ENCODE measurements at regions of chr4 and their contacts with region 1.

Region 1: GRCh38 chr4:118278473-118279274 is 74.1 kb downstream of the PRSS12 start:
- DNase-seq: peak; percentile 91 to 99 (median 95)
- ATAC-seq: peak; percentile 98
- H3K4me3 ChIP-seq: peak overlapping the region; percentile 80
- H3K4me3 Mint-ChIP-seq: peak overlapping the region; percentile 91 to 98 (median 94)
- H3K27ac ChIP-seq: peak overlapping the region; percentile 94
- H3K27ac Mint-ChIP-seq: peak overlapping the region; percentile 93 to 99 (median 98)
- H3K4me1 ChIP-seq: peaks cover 16 to 20% of the 10 kb centered on the region in 2 donors
- H3K4me1 Mint-ChIP-seq: peaks cover 24 to 58% (median 48%) of the 10 kb centered on the region in 7 donors
- H3K27me3 ChIP-seq: no peaks in the 10 kb centered on the region
- H3K27me3 Mint-ChIP-seq: no peaks in the 10 kb centered on the region

Region 2: GRCh38 chr4:118352843-118353533 is 74.3 kb after region 1 on chr4 and contains the start of gene PRSS12:
- CTCF ChIA-PET with region 1: no interaction called
- POLR2A ChIA-PET with region 1: no interaction called
- intact Hi-C with region 1: loop called (anchors 1 kb)
- DNase-seq: peak; percentile 5 to 69 (median 34)
- ATAC-seq: peak; percentile 84
- H3K4me3 ChIP-seq: peak within 1 kb of the TSS; percentile 13
- H3K4me3 Mint-ChIP-seq: peak within 1 kb of the TSS; percentile 78 to 86 (median 84)
- H3K27ac ChIP-seq: no peak within 1 kb of the TSS
- H3K27ac Mint-ChIP-seq: peak within 1 kb of the TSS in 4 of 9 donors; percentile 15 to 43 (median 32)
- H3K4me1 ChIP-seq: peaks cover 6 to 7% of the 10 kb centered on the region in 2 donors
- H3K4me1 Mint-ChIP-seq: peaks cover 6 to 20% (median 16%) of the 10 kb centered on the region in 7 donors
- H3K27me3 ChIP-seq: peaks cover 11 to 14% of the 10 kb centered on the region in 2 donors
- H3K27me3 Mint-ChIP-seq: peaks cover 72 to 83% (median 78%) of the 10 kb centered on the region in 5 donors
- total RNA-seq, gene PRSS12: not detected

Region 3: DNA sequence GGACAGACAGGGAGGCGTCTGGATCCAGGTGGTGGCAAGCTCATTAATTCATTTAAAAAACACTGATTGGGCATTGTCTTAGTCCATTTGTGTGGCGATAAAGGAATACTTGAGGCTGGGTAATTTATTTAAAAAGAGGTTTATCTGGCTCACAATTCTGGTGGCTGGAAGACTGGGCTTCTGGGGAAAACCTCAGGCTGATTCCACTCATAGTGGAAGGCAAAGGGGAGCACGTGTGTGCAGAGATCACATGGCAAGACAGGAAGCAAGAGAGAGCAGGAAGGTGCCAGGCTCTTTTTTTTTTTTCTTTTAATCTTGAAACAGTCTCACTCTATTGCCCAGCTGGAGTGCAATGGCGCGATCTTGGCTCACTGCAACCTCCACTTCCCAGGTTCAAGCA is 306.3 kb after region 1 on chr4:
- CTCF ChIA-PET with region 1: no interaction called
- POLR2A ChIA-PET with region 1: no interaction called
- intact Hi-C with region 1: no loop called
- DNase-seq: no peak
- ATAC-seq: no peak
- H3K4me3 ChIP-seq: no peak overlapping the region
- H3K4me3 Mint-ChIP-seq: peak overlapping the region in 1 of 10 donors; percentile 38
- H3K27ac ChIP-seq: no peak overlapping the region
- H3K27ac Mint-ChIP-seq: no peak overlapping the region
- H3K4me1 ChIP-seq: no peaks in the 10 kb centered on the region
- H3K4me1 Mint-ChIP-seq: peaks cover 0 to 8% (median 6%) of the 10 kb centered on the region in 7 donors
- H3K27me3 ChIP-seq: no peaks in the 10 kb centered on the region
- H3K27me3 Mint-ChIP-seq: peaks cover 2 to 44% (median 21%) of the 10 kb centered on the region in 5 donors

Region 4: DNA sequence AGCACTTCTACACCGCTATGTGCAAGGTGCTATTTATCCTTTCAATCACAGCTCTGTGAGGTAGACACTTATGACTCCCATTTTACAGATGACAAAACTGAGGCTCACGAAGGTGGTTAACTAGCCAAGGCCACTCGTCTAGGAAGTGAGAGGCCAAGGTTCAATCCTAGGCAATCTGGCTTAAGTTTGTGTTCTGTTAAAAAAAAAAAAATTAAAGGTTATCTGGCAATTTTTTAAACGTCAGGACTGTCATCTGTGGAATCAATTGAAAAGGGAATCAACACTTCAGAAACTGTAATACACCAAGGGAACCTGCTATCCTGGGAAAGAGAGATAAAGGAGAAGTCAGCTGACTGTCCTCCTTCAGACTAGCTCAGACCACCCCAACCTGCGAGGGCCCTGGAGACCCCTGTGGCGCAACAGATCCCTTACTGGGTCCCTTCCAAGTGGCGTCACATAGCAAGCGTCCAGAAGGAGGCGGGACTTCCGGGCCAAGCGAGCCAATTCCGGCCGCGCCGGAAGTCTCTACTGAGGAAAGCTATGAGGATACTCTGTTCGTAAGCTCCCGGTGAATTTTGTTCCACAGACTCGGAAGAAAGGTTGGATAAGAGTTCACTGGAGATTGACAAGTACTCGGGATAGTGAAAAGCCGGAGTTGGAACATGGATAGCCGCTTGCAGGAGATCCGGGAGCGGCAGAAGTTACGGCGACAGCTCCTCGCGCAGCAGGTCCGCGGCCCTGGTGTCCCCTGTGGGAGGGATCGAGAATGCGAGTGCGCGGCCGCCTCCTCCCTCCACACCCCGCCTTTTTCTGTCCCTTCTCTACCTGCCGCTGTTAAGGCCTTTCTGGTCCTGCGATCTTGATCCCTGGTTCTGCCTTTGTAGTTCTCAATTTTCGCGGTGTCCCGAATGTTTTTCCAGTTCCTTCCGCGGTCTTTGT is 406.5 kb after region 1 on chr4 and contains the start of gene METTL14:
- CTCF ChIA-PET with region 1: no interaction called
- POLR2A ChIA-PET with region 1: no interaction called
- intact Hi-C with region 1: loop called (anchors 1 kb)
- DNase-seq: peak; percentile 71 to 86 (median 82)
- ATAC-seq: peak; percentile 96
- H3K4me3 ChIP-seq: peak within 1 kb of the TSS; percentile 84
- H3K4me3 Mint-ChIP-seq: peak within 1 kb of the TSS; percentile 91 to 99 (median 97)
- H3K27ac ChIP-seq: peak within 1 kb of the TSS; percentile 83
- H3K27ac Mint-ChIP-seq: peak within 1 kb of the TSS; percentile 84 to 99 (median 96)
- H3K4me1 ChIP-seq: peaks cover 13 to 14% of the 10 kb centered on the region in 2 donors
- H3K4me1 Mint-ChIP-seq: peaks cover 12 to 41% (median 33%) of the 10 kb centered on the region in 7 donors
- H3K27me3 ChIP-seq: no peaks in the 10 kb centered on the region
- H3K27me3 Mint-ChIP-seq: no peaks in the 10 kb centered on the region
- total RNA-seq, gene METTL14: 46.9 to 64.8 (median 48.7) TPM

Region 5: DNA sequence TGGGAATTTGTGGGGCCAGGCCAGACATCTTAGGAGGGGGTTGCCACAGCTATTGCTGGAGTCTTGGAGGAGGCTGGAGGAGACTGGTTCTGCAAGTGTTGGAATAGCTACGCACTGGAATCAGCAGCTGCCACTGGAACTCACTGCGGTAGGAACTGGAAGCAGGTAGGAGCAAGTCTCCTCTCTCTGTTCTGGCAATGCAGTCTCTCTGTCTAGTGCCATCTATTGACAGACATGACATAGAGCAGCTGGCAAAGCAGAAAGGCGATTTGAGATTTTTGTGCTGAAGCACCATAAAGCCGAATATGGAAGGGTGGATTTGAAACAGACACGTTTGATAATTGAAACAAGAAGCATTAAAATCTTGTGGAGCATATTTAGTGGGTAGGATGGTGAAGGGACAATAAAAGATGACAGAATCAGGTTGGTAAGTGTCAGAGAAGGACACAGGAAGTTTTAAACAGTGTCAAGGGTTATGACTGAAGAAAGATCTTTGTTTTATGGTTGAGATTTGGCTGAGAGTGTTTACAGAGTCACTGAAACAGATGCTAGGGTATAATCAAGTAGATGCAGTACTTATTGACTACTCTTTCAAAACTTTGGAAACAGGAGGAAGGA is 586.5 kb after region 1 on chr4:
- CTCF ChIA-PET with region 1: no interaction called
- POLR2A ChIA-PET with region 1: no interaction called
- intact Hi-C with region 1: loop called in 1 of 2 experiments (anchors 1 kb)
- DNase-seq: peak in 6 of 9 donors; percentile 7 to 39 (median 28)
- ATAC-seq: peak; percentile 77
- H3K4me3 ChIP-seq: no peak overlapping the region
- H3K4me3 Mint-ChIP-seq: no peak overlapping the region
- H3K27ac ChIP-seq: no peak overlapping the region
- H3K27ac Mint-ChIP-seq: no peak overlapping the region
- H3K4me1 ChIP-seq: no peaks in the 10 kb centered on the region
- H3K4me1 Mint-ChIP-seq: peaks cover 0 to 7% (median 0%) of the 10 kb centered on the region in 7 donors
- H3K27me3 ChIP-seq: no peaks in the 10 kb centered on the region
- H3K27me3 Mint-ChIP-seq: peaks cover 0 to 16% (median 0%) of the 10 kb centered on the region in 5 donors

Region 6: DNA sequence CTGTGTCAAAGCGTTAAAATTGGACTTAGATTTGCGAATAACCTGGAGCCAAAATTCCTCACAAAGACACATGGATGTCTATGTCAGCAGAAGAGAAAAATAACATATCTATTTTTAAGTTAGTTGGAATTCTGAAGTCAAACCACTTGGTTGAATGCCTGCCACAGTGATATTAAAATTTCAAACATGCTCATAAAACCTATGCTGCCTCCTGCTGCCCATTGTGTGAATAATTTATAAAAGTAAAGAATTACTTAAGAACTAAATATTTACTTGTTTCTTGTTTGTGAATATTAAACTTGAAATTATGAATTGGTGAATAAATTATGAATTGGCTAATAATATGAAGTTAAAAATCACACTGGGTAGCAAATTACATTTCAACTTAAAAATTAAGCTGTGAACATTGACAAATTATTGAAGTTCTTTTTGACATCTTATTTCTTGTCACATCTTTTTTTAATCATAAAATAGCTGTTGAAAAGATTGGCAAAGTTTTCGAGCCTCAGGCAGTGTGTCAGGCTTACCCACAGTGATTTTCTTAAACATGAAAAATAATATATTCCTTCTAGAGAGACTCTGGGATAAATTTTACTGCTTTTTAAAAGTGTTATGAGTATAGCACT is 1007.8 kb after region 1 on chr4:
- CTCF ChIA-PET with region 1: no interaction called
- POLR2A ChIA-PET with region 1: no interaction called
- intact Hi-C with region 1: loop called in 1 of 2 experiments (anchors 5 kb)
- DNase-seq: peak in 7 of 9 donors; percentile 28 to 52 (median 42)
- ATAC-seq: peak; percentile 56
- H3K4me3 ChIP-seq: no peak overlapping the region
- H3K4me3 Mint-ChIP-seq: no peak overlapping the region
- H3K27ac ChIP-seq: no peak overlapping the region
- H3K27ac Mint-ChIP-seq: no peak overlapping the region
- H3K4me1 ChIP-seq: peaks cover 0 to 3% of the 10 kb centered on the region in 2 donors
- H3K4me1 Mint-ChIP-seq: peaks cover 13 to 34% (median 26%) of the 10 kb centered on the region in 7 donors
- H3K27me3 ChIP-seq: no peaks in the 10 kb centered on the region
- H3K27me3 Mint-ChIP-seq: no peaks in the 10 kb centered on the region

Region 7: DNA sequence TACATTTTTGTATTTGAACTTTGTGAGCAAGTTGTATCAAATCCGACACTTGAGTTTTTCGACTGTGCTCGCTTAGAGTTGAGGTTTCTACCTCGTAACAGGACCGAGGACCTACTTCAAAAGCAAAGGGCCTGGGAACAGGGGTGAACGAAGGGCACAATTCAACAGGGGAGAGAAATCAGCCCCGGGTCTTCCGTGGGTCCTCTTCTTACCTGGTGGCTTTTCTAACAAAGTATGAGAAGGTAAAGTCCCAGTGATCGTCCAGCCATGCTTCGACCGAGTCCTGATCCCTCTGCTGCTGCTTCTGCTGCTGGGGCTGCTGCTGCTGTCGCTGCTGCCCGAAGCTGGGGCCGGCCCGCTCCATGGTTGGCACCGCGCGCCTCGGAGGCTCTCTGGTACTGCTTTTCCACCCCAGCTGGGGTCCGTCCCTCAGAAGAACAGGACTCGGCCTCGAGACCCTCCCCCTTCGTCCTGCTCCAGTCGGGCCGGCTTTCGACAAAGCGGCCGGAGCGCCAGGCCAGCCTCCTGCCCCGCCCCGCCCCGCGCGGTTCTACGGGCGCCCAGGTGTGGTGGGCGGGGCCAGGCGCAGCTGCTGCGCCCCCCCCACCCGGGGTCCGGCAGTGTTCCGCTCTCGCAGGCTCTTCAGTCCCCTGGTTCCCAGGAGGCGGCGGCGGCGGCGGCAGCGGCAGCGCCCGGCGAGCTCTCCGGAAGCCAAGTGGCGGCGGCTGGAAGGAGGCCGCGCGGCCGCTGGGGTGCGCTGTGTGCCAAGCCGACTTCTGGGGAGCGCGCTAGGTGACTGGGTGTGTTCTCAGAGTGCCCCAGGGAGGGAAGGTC is 1349.9 kb after region 1 on chr4 and contains the start of gene PDE5A:
- CTCF ChIA-PET with region 1: no interaction called
- POLR2A ChIA-PET with region 1: no interaction called
- intact Hi-C with region 1: loop called in 1 of 2 experiments (anchors 10 kb)
- DNase-seq: peak; percentile 51 to 81 (median 71)
- ATAC-seq: peak; percentile 88
- H3K4me3 ChIP-seq: peak within 1 kb of the TSS; percentile 70
- H3K4me3 Mint-ChIP-seq: peak within 1 kb of the TSS; percentile 91 to 97 (median 94)
- H3K27ac ChIP-seq: peak within 1 kb of the TSS; percentile 45
- H3K27ac Mint-ChIP-seq: peak within 1 kb of the TSS; percentile 4 to 94 (median 71)
- H3K4me1 ChIP-seq: peaks cover 6 to 7% of the 10 kb centered on the region in 2 donors
- H3K4me1 Mint-ChIP-seq: peaks cover 7 to 27% (median 23%) of the 10 kb centered on the region in 7 donors
- H3K27me3 ChIP-seq: no peaks in the 10 kb centered on the region
- H3K27me3 Mint-ChIP-seq: peaks cover 5 to 73% (median 11%) of the 10 kb centered on the region in 5 donors
- total RNA-seq, gene PDE5A: 0.21 to 1.5 (median 0.65) TPM

Measured in naive thymus-derived CD4-positive, alpha-beta T cell (primary cell).